ENCODE measurements at regions of chr1 and their contacts with region 1.

Region 1: DNA sequence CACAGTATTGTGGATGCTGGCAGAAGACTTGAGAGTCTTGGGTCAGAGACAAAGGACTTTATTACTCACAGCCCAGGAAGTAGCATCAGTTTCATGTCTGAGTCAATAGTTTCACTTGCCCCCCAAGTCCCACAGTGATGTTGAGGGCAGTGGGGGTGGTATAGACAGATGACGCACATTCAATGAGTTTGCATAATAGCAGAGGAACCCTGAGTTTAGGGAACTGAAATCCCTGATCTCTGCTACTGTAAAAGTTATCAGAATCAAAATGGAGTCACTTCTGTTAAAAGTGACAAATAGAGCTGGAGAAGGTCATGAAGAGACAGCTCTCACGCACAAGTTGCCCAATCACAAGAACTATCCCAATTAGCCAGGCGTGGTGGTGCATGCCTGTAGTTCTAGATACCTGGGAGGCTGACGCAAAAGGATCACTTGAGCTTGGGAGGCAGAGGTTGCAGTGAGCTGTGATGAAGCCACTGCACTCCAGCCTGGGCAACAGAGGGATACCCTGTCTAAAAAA is 11.5 kb upstream of the HCRTR1 start:
- DNase-seq: no peak
- H3K4me3 ChIP-seq: no peak overlapping the region
- H3K27ac ChIP-seq: no peak overlapping the region
- H3K4me1 ChIP-seq: 0 out of 4 replicates have a peak, but pooled peaks cover 0 to 8% of the 10 kb centered on the region in 2 experiments
- H3K27me3 ChIP-seq: no peaks in the 10 kb centered on the region
- CTCF ChIP-seq: no peak
- EP300 ChIP-seq: no peak
- RAD21 ChIP-seq: no peak

Region 2: GRCh38 chr1:31434171-31434871 is 171.6 kb before region 1 on chr1:
- CTCF ChIA-PET with region 1: no interaction called
- POLR2A ChIA-PET with region 1: no interaction called
- DNase-seq: no peak
- H3K4me3 ChIP-seq: no peak overlapping the region
- H3K27ac ChIP-seq: no peak overlapping the region
- H3K4me1 ChIP-seq: no peaks in the 10 kb centered on the region
- H3K27me3 ChIP-seq: no peaks in the 10 kb centered on the region
- CTCF ChIP-seq: no peak
- EP300 ChIP-seq: no peak
- RAD21 ChIP-seq: no peak

Region 3: DNA sequence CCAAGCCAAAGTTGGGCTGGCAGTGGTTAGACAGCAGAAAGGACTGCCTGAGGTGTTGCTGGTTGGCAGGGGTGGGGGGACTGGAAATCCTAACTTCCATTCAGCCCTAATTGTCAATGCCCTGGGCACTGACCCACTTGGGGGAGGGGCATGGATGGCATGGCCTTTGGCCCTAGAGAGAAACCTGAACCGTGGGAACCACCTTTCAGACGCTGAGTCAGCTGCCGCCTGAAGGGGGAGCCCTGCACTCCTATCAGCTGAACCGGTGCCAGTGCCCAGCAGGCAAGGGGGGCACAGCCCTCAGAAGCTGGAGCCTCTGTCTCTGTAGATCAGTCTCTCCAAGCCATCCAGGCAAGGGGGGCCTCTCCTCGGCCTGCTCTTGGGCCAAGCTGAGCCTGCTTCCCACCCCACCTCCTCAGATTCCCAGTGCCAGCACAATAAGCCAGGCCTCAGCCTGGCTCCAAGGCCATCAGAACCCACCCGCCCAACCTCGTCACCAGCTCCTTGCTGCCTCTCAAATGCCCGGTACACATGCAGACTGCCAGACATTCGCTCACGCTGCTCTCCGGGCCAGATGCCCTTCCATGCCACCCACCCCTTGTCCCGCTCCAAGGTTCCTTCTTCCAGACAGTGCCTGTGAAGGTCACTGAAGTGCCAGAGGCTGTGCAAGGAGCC is 18.1 kb before region 1 on chr1:
- CTCF ChIA-PET with region 1: interaction called, 13 read pairs
- POLR2A ChIA-PET with region 1: no interaction called
- DNase-seq: peak; percentile 94
- H3K4me3 ChIP-seq: no peak overlapping the region; a peak in 1 of 4 replicates
- H3K27ac ChIP-seq: no peak overlapping the region
- H3K4me1 ChIP-seq: peaks cover 10 to 18% of the 10 kb centered on the region in 2 experiments; a peak in 3 of 4 replicates
- H3K27me3 ChIP-seq: no peaks in the 10 kb centered on the region
- CTCF ChIP-seq: peak; percentile 78
- EP300 ChIP-seq: no peak
- RAD21 ChIP-seq: peak; percentile 58

Region 4: GRCh38 chr1:31689821-31690220 is 83.9 kb after region 1 on chr1:
- CTCF ChIA-PET with region 1: no interaction called
- POLR2A ChIA-PET with region 1: no interaction called
- DNase-seq: no peak
- H3K4me3 ChIP-seq: no peak overlapping the region
- H3K27ac ChIP-seq: peak overlapping the region in 1 of 2 experiments; percentile 85; a peak in 2 of 4 replicates
- H3K4me1 ChIP-seq: peaks cover 18 to 23% of the 10 kb centered on the region in 2 experiments; a peak in 3 of 4 replicates
- H3K27me3 ChIP-seq: no peaks in the 10 kb centered on the region
- CTCF ChIP-seq: no peak
- EP300 ChIP-seq: peak in 1 of 2 experiments; percentile 83; a peak in 1 of 4 replicates
- RAD21 ChIP-seq: no peak